ENCODE measurements at regions of chr1 and their contacts with region 1.

Region 1: GRCh38 chr1:220733090-220733601 is 15.0 kb upstream of the MTARC2 start:
- DNase-seq: peak; percentile 84
- ATAC-seq: peak; percentile 95
- H3K4me3 Mint-ChIP-seq: no peak overlapping the region
- H3K27ac Mint-ChIP-seq: no peak overlapping the region
- H3K4me1 Mint-ChIP-seq: peaks cover 9% of the 10 kb centered on the region
- H3K27me3 Mint-ChIP-seq: peaks cover 4% of the 10 kb centered on the region

Region 2: DNA sequence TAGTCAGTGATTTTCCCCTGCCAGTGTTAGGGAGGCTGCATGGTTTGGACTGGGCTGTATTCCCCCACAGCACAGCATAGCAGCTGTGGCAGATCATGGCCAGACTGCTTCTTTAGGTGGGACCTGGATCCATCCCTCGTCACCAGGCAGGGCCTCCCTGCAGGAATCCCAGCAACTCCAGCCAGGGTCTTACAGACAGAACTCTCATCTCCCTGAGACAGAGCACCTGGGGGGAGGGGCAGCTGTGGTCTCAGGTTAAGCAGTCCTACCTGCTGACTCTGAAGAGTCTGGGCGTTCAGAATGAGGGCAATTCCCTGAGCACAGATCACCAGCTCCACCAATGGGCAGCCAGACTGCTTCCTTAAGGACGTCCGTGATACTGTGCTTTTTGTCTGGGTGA is 90.9 kb before region 1 on chr1:
- CTCF ChIA-PET with region 1: no interaction called
- DNase-seq: no peak
- ATAC-seq: no peak
- H3K4me3 Mint-ChIP-seq: no peak overlapping the region
- H3K27ac Mint-ChIP-seq: no peak overlapping the region
- H3K4me1 Mint-ChIP-seq: no peaks in the 10 kb centered on the region
- H3K27me3 Mint-ChIP-seq: peaks cover 4% of the 10 kb centered on the region

Region 3: DNA sequence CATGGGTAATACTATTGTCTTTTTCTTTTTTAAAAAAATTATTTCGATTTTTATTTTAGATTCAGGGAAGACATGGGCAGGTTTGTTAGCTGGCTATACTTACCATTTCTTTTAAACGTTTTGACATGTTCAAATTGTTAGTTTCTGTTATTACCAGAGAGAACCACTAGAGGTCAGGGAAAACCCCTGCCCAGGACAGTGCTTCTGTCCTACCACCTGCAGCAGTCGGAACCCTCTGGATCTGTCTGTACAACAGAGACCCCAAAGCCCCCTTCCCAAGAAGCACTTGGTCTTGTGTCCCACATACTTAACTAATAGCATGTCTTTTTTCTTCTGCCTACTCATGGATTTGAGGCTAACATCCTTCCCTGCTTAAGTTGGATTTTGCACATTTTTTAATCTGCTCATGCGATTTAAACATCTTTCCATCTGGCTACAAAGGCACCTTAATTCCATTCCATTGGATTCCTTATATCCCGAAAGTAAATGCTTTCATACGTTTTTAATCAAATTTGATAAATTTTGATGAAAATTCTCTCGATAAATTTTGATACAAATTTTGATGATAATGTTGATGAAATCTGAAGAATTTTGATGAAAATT is 53.0 kb before region 1 on chr1:
- CTCF ChIA-PET with region 1: interaction called, 12 read pairs
- DNase-seq: no peak
- ATAC-seq: peak; percentile 60
- H3K4me3 Mint-ChIP-seq: no peak overlapping the region
- H3K27ac Mint-ChIP-seq: no peak overlapping the region
- H3K4me1 Mint-ChIP-seq: no peaks in the 10 kb centered on the region
- H3K27me3 Mint-ChIP-seq: peaks cover 10% of the 10 kb centered on the region

Region 4: GRCh38 chr1:220690140-220691025 is 42.8 kb before region 1 on chr1 and contains the start of gene C1orf115:
- CTCF ChIA-PET with region 1: interaction called, 16 read pairs
- DNase-seq: peak; percentile 72
- ATAC-seq: peak; percentile 97
- H3K4me3 Mint-ChIP-seq: peak within 1 kb of the TSS; percentile 71
- H3K27ac Mint-ChIP-seq: no peak within 1 kb of the TSS
- H3K4me1 Mint-ChIP-seq: peaks cover 6% of the 10 kb centered on the region
- H3K27me3 Mint-ChIP-seq: peaks cover 24% of the 10 kb centered on the region
- total RNA-seq, gene C1orf115: 0.12 to 0.16 TPM

Region 5: GRCh38 chr1:221035680-221036153 is 302.6 kb after region 1 on chr1:
- CTCF ChIA-PET with region 1: no interaction called
- DNase-seq: no peak
- ATAC-seq: no peak
- H3K4me3 Mint-ChIP-seq: no peak overlapping the region
- H3K27ac Mint-ChIP-seq: no peak overlapping the region
- H3K4me1 Mint-ChIP-seq: peaks cover 3% of the 10 kb centered on the region
- H3K27me3 Mint-ChIP-seq: no peaks in the 10 kb centered on the region

Measured in activated CD8-positive, alpha-beta memory T cell treated with anti-CD3 and anti-CD28 coated beads, Interleukin-2, amount 10 ng/mL, durations not matched to agents 7 days and 5 days (primary cell).